ENCODE measurements at regions of chr19 and their contacts with region 1.

Region 1: DNA sequence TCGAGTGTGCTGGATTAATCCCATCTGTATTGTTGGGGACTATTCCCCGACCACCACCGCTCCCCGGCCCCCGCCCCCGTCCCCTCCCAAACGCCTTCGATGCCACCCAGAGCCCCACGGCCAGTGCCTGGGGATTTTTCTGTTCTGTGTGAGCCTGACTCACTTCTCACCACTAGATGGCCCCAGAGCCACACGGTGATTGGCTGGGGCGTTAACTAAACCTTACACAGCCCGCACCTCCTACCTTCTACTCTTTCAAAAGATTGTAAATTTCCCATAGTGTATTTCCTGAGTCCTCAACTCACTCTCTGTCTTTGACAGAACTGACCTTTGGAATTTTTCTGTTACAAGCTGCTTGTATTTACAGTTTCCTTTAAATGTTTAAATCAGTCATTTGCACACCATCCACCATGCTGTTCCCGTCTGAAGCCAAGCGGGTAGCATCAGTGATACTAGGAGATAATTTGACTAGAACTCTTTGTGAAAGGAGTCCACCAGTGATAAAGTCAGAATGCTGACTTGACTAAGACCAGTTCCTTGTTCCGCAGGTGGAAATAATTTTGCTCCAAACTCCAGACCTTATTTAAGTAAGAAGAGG is 61.4 kb downstream of the RFX2 start:
- DNase-seq: peak; percentile 30
- ATAC-seq: peak; percentile 99
- H3K4me3 ChIP-seq: no peak overlapping the region
- H3K27ac ChIP-seq: no peak overlapping the region
- H3K4me1 ChIP-seq: 0 out of 2 replicates have a peak, but pooled peaks cover 3% of the 10 kb centered on the region
- H3K27me3 ChIP-seq: no peaks in the 10 kb centered on the region
- CTCF ChIP-seq: peak; percentile 84

Region 2: DNA sequence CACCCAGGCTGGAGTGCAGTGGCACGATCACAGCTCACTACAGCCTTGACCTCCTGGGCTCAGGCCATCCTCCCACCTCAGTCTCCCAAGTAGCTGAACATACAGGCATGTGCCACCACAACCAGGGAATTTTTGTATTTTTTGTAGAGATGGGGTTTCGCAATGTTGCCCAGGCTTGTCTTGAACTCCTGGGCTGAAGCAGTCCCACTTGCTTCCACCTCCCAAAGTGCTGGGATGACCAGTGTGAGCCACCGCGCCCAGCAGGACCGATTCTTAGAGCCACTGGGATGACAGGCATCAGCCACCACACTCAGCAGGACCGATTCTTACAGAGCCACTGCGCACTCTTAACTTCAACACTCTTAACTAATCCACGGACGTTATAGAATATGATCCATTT is 16.1 kb before region 1 on chr19:
- CTCF ChIA-PET with region 1: no interaction called
- POLR2A ChIA-PET with region 1: interaction called, 16 read pairs
- in situ Hi-C with region 1: no loop called
- intact Hi-C with region 1: no loop called
- DNase-seq: no peak
- ATAC-seq: no peak
- H3K4me3 ChIP-seq: no peak overlapping the region
- H3K27ac ChIP-seq: no peak overlapping the region
- H3K4me1 ChIP-seq: no peaks in the 10 kb centered on the region
- H3K27me3 ChIP-seq: no peaks in the 10 kb centered on the region
- CTCF ChIP-seq: no peak

Region 3: GRCh38 chr19:6076675-6077463 is 28.0 kb after region 1 on chr19:
- CTCF ChIA-PET with region 1: interaction called, 10 read pairs
- POLR2A ChIA-PET with region 1: no interaction called
- in situ Hi-C with region 1: no loop called
- intact Hi-C with region 1: no loop called
- DNase-seq: no peak
- ATAC-seq: no peak
- H3K4me3 ChIP-seq: no peak overlapping the region
- H3K27ac ChIP-seq: peak overlapping the region; percentile 51; the same call in 1 of the 2 replicates
- H3K4me1 ChIP-seq: no peaks in the 10 kb centered on the region
- H3K27me3 ChIP-seq: no peaks in the 10 kb centered on the region
- CTCF ChIP-seq: no peak

Region 4: DNA sequence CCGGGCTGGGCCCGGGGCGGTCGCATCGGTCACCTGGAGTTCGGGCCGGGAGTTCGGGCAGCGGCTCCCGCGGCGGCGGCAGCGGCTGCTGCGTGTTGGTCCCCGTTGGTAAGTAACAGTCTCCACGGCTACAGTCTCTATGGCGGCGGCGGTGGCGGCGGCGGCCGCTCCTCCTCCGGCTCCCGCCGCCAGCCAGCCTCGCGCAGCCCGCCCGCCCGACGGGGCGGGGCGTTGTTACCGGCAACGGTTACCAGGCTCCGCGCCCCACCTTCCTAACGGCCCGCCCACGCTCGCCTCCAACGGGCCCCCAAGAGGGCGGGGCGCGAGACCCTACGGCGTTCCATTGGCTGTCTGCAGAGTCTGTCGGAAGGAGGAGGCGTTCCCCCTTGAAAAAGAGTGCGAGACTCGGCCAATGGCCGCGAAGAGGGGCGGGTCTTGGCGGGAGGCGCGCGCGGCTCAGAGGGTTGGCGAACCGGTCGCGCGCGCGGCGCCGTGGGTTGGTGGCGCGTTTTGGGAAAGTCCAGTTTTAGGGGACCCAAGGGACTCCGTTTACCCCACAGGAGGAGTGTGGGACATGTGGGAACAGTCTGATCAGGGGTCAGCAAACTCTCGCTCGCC is 61.6 kb after region 1 on chr19 and contains the start of gene RFX2:
- CTCF ChIA-PET with region 1: no interaction called
- POLR2A ChIA-PET with region 1: no interaction called
- in situ Hi-C with region 1: no loop called
- intact Hi-C with region 1: no loop called
- DNase-seq: peak; percentile 74
- ATAC-seq: peak; percentile 99
- H3K4me3 ChIP-seq: peak within 1 kb of the TSS; percentile 59 to 75
- H3K27ac ChIP-seq: peak within 1 kb of the TSS; percentile 73
- H3K4me1 ChIP-seq: peaks cover 5% of the 10 kb centered on the region
- H3K27me3 ChIP-seq: no peaks in the 10 kb centered on the region
- CTCF ChIP-seq: no peak
- total RNA-seq, gene RFX2: 8.0 TPM

Region 5: GRCh38 chr19:6292006-6292405 is 243.1 kb after region 1 on chr19:
- CTCF ChIA-PET with region 1: no interaction called
- POLR2A ChIA-PET with region 1: no interaction called
- in situ Hi-C with region 1: no loop called
- intact Hi-C with region 1: no loop called
- DNase-seq: no peak
- ATAC-seq: no peak
- H3K4me3 ChIP-seq: no peak overlapping the region
- H3K27ac ChIP-seq: no peak overlapping the region
- H3K4me1 ChIP-seq: no peaks in the 10 kb centered on the region
- H3K27me3 ChIP-seq: no peaks in the 10 kb centered on the region
- CTCF ChIP-seq: no peak